CD4-positive, alpha-beta T cell (primary cell): ENCODE measurements at regions of chr7 and their contacts with region 1.

Region 1: DNA sequence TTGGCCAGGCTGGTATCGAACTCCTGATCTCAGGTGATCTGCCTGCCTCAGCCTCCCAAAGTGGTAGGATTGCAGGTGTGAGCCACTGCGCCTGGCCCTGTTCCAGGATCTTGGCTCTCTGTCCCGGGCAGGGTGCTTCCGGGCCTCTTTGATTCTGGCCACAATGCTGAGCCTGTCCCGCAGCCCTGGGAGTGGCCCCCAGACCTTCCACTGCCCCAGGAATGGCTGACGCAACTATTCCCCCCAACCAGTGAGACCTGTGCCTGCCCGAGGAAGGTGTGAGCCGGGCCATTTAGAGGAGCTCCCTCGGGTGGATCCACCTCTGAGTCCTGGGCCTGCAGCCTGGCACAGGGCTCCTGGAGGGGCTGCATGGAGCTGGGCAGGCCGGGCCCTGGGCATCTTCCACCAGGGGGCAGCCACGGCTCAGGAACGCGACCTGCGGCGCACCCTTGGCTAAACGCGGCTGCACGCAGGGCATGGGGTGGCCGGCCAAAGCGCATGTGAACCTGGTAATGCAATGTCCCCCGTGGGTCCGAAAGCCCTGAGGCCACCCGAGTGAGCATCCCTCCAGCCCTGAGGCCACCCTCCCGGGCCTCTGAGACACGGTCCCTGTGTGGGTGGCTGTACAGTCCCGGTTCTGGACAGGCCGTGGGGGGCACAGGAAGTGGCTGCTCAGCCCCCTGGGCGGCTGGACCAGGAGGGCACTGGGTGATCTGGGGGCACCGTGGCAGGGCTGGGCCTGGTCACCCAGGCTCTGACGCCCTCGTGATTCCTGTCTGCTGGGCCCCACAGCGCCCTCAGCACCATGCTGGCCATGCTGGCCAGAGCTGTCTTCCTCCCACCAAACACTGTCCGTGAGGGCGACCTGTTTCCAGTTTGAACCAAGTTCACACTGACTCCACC is 24.8 kb downstream of the GRIFIN start:
- DNase-seq: peak; percentile 61 to 87 (median 72)
- ATAC-seq: peak; percentile 95
- H3K4me3 ChIP-seq: peak overlapping the region; percentile 46
- H3K4me3 Mint-ChIP-seq: no peak overlapping the region
- H3K27ac ChIP-seq: no peak overlapping the region
- H3K27ac Mint-ChIP-seq: no peak overlapping the region
- H3K4me1 ChIP-seq: peaks cover 12% of the 10 kb centered on the region
- H3K4me1 Mint-ChIP-seq: no peaks in the 10 kb centered on the region
- H3K27me3 ChIP-seq: peaks cover 0 to 9% of the 10 kb centered on the region in 2 experiments
- H3K27me3 Mint-ChIP-seq: no peaks in the 10 kb centered on the region
- CTCF ChIP-seq: peak; percentile 83

Region 2: DNA sequence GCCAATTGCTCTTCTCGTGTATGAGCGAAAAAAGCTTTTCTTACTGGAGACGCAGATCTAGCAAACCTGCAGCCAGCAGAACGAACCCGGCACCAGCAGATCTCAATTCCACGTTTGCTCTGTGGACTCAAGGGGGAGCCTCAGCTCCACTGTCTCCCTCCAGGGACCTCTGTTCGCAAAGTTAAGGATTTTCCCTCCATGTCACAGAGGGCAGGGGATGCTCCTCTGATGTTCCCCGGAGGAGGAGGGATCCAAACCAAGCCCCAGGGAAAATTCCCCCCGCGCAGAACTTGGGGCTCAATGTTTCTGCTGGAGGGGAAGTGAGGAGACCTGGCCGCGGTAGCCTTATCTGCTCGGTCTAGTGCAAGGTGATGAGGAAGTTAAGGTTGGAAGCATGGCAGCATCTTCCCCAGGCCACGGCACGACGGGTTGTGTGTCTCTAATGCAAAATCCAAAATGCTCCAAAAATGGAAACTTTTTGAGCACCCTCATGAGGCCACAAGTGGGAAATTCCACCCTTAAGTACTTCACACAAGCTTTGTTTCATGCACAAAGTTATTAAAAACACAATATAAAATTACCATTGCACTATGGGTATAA is 116.4 kb after region 1 on chr7:
- CTCF ChIA-PET with region 1: interaction called, 4 read pairs
- POLR2A ChIA-PET with region 1: no interaction called
- intact Hi-C with region 1: loop called (anchors 5 kb)
- DNase-seq: peak in 1 of 14 experiments; percentile 38
- ATAC-seq: no peak
- H3K4me3 ChIP-seq: no peak overlapping the region
- H3K4me3 Mint-ChIP-seq: no peak overlapping the region
- H3K27ac ChIP-seq: no peak overlapping the region
- H3K27ac Mint-ChIP-seq: no peak overlapping the region
- H3K4me1 ChIP-seq: peaks cover 13% of the 10 kb centered on the region
- H3K4me1 Mint-ChIP-seq: peaks cover 22% of the 10 kb centered on the region
- H3K27me3 ChIP-seq: no peaks in the 10 kb centered on the region
- H3K27me3 Mint-ChIP-seq: no peaks in the 10 kb centered on the region
- CTCF ChIP-seq: no peak

Region 3: DNA sequence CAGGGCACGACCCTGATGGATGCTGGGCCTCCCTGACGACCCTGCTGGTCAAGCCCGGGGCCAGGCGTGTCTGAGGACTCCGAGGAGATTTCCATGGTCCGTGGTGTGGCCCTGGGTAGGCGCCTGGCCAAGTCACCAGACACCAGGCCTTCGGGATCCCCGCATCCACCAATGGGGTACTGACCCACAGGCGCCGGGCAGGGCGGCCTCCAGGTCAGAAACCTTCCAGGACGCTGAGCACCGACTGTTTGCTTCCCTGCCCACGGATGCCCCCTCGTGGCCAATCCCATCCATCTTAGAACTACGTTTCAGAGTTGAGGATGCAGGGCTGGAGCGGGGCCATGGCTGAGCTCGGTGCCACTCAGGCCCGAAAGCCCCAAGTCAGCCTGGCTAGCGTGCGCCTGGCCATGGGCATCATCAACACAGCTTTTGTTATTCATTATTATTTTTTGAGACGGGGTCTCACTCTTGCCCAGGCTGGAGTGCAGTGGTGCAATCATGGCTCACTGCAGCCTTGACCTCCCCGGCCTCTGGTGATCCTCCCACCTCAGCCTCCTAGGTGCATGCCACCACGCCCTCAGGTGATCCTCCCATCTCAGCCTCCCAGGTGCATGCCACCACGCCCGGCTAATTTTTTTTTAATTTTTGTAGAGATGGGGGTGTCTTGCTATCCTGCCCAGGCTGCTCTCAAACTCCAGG is 229.5 kb after region 1 on chr7:
- CTCF ChIA-PET with region 1: interaction called, 10 read pairs
- POLR2A ChIA-PET with region 1: no interaction called
- intact Hi-C with region 1: loop called in 1 of 2 experiments (anchors 1 kb)
- DNase-seq: peak in 13 of 14 experiments; percentile 14 to 74 (median 48)
- ATAC-seq: no peak
- H3K4me3 ChIP-seq: no peak overlapping the region
- H3K4me3 Mint-ChIP-seq: no peak overlapping the region
- H3K27ac ChIP-seq: no peak overlapping the region
- H3K27ac Mint-ChIP-seq: no peak overlapping the region
- H3K4me1 ChIP-seq: peaks cover 4% of the 10 kb centered on the region
- H3K4me1 Mint-ChIP-seq: no peaks in the 10 kb centered on the region
- H3K27me3 ChIP-seq: no peaks in the 10 kb centered on the region
- H3K27me3 Mint-ChIP-seq: peaks cover 6% of the 10 kb centered on the region
- CTCF ChIP-seq: peak; percentile 57